ENCODE measurements at regions of chr17 and their contacts with region 1.

Region 1: DNA sequence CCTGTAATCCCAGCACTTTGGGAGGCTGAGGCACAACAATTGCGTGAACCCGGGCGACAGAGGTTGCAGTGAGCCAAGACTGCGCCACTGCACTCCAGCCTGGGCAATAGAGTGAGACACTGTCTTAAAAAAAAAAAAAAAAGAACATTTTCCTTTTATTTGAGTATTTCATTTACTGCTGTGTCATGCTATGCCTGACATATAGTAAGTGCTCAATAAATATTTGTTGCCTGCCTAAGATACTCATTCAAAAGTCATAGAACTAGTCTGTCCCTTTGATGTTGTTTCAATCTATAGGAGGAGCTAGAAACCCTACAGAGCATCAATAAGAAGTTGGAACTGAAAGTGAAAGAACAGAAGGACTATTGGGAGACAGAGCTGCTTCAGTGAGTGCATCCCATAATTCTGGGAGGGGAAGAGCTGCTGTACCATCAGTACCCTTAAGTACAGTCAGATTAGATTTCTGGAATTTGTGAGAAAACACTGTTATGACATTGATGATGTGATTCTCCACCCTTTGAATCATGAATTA is 20.0 kb downstream of the CALCOCO2 start:
- DNase-seq: no peak
- H3K4me3 ChIP-seq: no peak overlapping the region
- H3K27ac ChIP-seq: no peak overlapping the region
- H3K4me1 ChIP-seq: peaks cover 0 to 8% (median 5%) of the 10 kb centered on the region in 4 donors
- H3K27me3 ChIP-seq: no peaks in the 10 kb centered on the region
- CTCF ChIP-seq: no peak
- EP300 ChIP-seq: no peak
- POLR2A ChIP-seq: no peak

Region 2: DNA sequence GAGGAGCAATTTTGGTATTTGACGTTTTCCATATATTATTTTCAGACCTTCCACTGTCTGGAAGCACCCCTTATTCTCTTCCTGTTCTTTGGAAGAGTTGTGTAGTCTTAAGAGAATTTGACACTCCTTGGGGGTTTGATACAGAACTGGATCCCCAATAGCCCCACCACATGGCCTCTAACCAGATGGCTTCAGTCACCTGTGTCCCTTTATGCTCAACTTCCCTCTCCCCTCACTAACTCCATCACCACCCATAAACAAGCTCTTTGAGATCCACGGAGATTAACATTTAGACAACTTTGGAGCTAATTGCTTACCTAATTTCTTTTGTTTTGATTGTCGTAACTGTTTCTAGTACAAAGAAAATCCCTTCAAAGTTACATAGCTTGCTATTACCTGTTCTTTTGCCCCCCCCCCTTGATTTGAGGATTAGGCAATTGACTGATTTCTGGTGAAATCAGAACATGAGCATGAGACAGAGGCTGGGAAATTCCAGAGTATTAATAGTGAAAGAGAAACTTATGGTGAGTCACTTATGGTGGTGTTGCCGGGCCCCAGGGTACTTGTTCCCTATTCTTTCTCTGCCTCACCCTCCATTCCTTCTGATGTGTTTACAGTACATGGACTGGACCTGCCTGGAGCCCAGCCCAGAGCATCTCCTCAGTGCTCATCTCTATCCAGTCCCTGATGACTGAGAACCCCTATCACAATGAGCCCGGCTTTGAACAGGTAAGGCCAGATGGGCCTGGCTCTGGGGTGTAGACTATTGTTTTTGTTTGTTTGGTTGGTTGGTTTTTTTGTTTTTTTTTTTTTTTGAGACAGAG is 64.8 kb after region 1 on chr17:
- intact Hi-C with region 1: loop called (anchors 10 kb)
- DNase-seq: no peak
- H3K4me3 ChIP-seq: no peak overlapping the region
- H3K27ac ChIP-seq: peak overlapping the region; percentile 15 to 40 (median 31)
- H3K4me1 ChIP-seq: peaks cover 16 to 40% (median 34%) of the 10 kb centered on the region in 4 donors
- H3K27me3 ChIP-seq: no peaks in the 10 kb centered on the region
- CTCF ChIP-seq: no peak
- EP300 ChIP-seq: no peak
- POLR2A ChIP-seq: no peak

Region 3: GRCh38 chr17:48944519-48945260 is 93.8 kb after region 1 on chr17 and contains the start of gene SNF8:
- intact Hi-C with region 1: no loop called
- DNase-seq: peak; percentile 96
- H3K4me3 ChIP-seq: peak within 1 kb of the TSS; percentile 91 to 93 (median 92)
- H3K27ac ChIP-seq: peak within 1 kb of the TSS; percentile 84 to 93 (median 88)
- H3K4me1 ChIP-seq: peaks cover 18 to 35% (median 28%) of the 10 kb centered on the region in 4 donors
- H3K27me3 ChIP-seq: peaks cover 0 to 10% (median 0%) of the 10 kb centered on the region in 4 donors
- CTCF ChIP-seq: no peak
- EP300 ChIP-seq: no peak
- POLR2A ChIP-seq: peak; percentile 62
- total RNA-seq, gene SNF8: 80.6 to 97.1 (median 92.3) TPM